Ovary (tissue), 10 donors: ENCODE measurements at regions of chr16 and their contacts with region 1.

Region 1: DNA sequence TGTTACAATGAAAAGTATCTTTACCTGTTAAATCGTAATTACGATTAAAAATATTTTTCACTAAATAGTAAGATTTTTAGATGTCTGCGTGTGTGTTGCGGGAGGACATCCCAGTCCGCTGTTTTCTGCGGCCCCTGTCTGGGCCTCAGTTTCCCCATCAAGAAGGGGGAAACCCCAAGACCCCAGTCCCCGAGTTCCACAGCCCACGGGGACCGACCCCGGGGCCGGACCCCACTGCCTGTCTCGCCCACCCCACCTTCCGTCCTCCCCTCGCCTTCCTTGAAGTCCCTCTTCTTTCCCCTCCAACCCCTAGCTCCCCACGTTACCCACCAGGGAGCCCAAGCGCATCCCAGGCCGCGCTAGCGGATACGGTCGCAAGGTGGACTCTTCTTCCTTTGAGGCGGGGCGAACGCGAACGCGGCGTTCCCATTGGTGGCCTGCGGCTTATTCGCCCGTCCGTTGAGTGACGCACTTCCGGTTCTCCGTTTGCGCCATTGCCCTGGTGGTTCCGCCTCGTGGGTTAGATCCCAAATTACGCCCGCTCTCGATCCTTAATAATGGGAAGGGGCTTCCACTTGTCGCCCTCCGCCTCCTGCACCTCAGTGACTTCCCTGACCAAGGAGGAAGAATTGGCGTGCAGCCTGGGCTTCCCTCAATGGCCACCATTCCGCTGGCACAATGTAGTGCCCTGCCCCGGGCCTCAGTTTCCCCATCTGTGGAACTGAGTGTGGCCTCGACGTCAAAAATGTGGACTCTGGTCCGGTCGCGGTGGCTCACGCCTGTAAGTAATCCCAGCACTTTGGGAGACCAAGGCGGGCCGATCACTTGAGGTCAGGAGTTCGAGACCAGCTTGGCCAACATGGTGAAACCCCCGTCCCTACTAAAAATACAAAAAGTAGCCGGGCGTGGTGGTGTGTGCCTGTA is at the start of gene NSMCE1:
- DNase-seq: peak; percentile 97 to 99 (median 99)
- H3K4me3 ChIP-seq: peak within 1 kb of the TSS; percentile 91
- H3K27ac ChIP-seq: peak within 1 kb of the TSS in 1 of 2 donors; percentile 50
- H3K4me1 ChIP-seq: peaks cover 8% of the 10 kb centered on the region
- H3K27me3 ChIP-seq: no peaks in the 10 kb centered on the region
- CTCF ChIP-seq: peak in 2 of 3 donors; percentile 37 to 38
- EP300 ChIP-seq: no peak
- POLR2A ChIP-seq: peak; percentile 65
- total RNA-seq, gene NSMCE1: 19.8 to 68.4 (median 48.9) TPM

Region 2: DNA sequence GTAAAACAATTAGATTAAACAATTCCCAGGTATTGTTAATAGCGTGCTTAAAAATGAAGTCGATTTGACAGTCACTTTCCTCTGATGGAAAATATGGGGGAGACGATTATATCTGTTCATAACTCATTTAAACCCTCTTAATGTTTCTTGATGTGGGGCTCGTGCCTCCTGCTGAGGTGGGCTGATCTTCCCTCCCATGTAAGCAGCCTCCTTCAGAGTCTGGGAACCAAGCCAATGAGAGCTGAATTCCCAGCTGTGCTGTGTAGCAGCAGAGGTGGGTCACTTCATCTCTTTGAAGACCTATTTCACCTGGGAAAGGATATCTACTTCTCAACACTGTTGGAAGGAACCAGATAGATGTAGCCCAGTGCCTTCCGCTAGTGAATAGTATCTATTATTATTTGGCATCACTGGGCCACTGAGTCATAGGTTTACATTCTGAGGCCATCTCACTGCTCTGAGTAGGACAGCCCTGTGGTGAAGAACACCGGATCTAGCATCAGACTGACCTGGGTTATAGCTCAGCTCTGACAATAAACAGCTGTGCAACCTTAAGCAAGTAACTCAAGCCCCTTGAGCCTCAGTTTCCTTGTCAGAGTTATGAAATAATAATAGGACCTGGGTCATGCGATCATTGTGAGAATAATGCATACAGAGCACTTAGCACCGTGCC is 287.2 kb before region 1 on chr16:
- intact Hi-C with region 1: no loop called
- DNase-seq: no peak
- H3K4me3 ChIP-seq: no peak overlapping the region
- H3K27ac ChIP-seq: no peak overlapping the region
- H3K4me1 ChIP-seq: no peaks in the 10 kb centered on the region
- H3K27me3 ChIP-seq: no peaks in the 10 kb centered on the region
- CTCF ChIP-seq: no peak
- EP300 ChIP-seq: no peak
- POLR2A ChIP-seq: no peak

Region 3: DNA sequence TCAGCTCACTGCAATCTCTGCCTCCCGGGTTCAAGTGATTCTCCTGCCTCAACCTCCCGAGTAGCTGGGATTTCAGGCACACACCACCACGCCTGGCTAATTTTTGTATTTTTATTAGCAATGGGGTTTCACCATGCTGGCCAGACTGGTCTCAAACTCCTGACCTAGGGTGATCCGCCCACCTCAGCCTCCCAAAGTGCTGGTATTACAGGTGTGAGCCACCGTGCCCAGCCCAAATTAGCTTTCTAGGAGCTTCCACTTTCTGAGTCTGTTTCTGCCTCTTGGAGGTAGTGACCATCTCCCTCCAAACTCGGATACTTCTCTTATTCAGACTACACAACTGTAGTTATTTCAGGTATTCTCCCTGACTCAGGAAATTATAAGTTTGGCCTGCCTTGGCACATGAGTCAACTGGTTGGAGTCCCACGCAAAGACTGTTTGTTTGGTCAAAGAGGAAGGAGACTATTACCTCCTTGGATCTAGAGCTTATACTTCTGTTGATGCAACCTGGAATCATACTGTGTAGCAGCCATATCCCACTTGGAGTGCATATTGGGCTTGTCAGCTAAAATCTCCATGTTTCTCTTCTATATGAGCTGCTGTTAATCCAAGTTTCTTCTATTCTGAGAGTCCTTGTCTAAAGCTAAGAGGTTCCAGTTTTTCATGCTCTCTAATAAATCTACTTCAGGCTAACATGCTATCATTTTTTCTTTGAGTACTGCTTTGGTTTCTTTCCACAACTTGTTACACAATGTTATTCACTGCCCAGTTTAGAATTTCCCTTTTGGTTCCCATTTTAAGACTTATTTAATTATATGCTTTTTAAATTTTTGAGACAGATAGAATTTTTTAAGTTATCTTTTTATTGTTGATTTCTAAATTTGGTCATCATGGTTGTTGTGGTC is 52.6 kb after region 1 on chr16:
- intact Hi-C with region 1: loop called in 1 of 4 experiments (anchors 5 kb)
- DNase-seq: peak in 1 of 5 donors; percentile 1
- H3K4me3 ChIP-seq: no peak overlapping the region
- H3K27ac ChIP-seq: no peak overlapping the region
- H3K4me1 ChIP-seq: no peaks in the 10 kb centered on the region
- H3K27me3 ChIP-seq: no peaks in the 10 kb centered on the region
- CTCF ChIP-seq: no peak
- EP300 ChIP-seq: no peak
- POLR2A ChIP-seq: no peak